PC-9 (cell line): ENCODE measurements at regions of chr5 and their contacts with region 1.

Region 1: GRCh38 chr5:166926138-166926537 is 1365.3 kb upstream of the WWC1 start:
- DNase-seq: no peak
- H3K4me3 ChIP-seq: no peak overlapping the region
- H3K27ac ChIP-seq: no peak overlapping the region
- H3K4me1 ChIP-seq: no peaks in the 10 kb centered on the region
- H3K27me3 ChIP-seq: peaks cover 11% of the 10 kb centered on the region; the same call in 1 of the 2 replicates
- CTCF ChIP-seq: no peak

Region 2: DNA sequence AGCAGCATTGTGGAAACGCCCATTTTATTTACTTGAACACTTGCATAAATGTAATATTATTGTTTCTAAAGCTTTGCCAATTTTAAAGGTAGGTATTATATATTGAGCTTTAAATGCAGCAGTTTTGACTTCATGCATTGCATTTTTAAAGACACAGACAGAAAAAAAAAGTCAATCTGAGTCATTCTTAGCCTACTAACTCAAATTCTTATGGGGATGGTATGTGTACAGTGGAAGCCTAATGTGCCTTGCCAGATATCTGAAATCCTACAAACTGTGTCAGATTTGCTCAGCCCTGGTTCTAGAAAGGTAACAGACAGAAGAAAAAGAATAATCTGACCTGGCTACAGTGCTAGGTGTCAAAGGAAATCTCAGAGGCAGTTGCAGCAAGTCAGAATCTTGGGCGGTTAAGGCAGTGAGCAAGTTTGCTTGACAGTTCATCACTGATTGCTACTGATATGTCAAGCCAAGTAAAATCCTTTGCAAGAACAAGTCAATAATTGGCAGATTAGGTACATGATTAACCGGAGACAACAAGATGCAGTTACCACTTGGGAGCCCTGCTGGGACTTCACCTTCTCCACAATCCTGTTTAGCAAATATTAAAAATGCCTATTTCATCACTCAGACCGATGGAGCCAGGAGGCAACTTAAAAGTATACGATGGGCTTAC is 1140.5 kb after region 1 on chr5:
- CTCF ChIA-PET with region 1: no interaction called
- POLR2A ChIA-PET with region 1: interaction called, 12 read pairs
- intact Hi-C with region 1: no loop called
- DNase-seq: no peak
- H3K4me3 ChIP-seq: no peak overlapping the region
- H3K27ac ChIP-seq: no peak overlapping the region
- H3K4me1 ChIP-seq: no peaks in the 10 kb centered on the region
- H3K27me3 ChIP-seq: peaks cover 51% of the 10 kb centered on the region
- CTCF ChIP-seq: no peak